Caco-2 (cell line): ENCODE measurements at regions of chr14 and their contacts with region 1.

Region 1: GRCh38 chr14:68297876-68298469 is 478.4 kb downstream of the RAD51B start:
- DNase-seq: peak; percentile 36 to 49
- H3K4me3 ChIP-seq: no peak overlapping the region
- H3K4me3 Mint-ChIP-seq: no peak overlapping the region
- H3K27ac Mint-ChIP-seq: peak overlapping the region; percentile 21
- H3K4me1 ChIP-seq: peaks cover 35% of the 10 kb centered on the region
- H3K4me1 Mint-ChIP-seq: peaks cover 27% of the 10 kb centered on the region
- H3K27me3 ChIP-seq: no peaks in the 10 kb centered on the region
- H3K27me3 Mint-ChIP-seq: no peaks in the 10 kb centered on the region
- CTCF ChIP-seq: no peak

Region 2: GRCh38 chr14:68255697-68256203 is 42.2 kb before region 1 on chr14:
- CTCF ChIA-PET with region 1: no interaction called
- POLR2A ChIA-PET with region 1: no interaction called
- intact Hi-C with region 1: loop called (anchors 5 kb)
- DNase-seq: no peak
- H3K4me3 ChIP-seq: no peak overlapping the region
- H3K4me3 Mint-ChIP-seq: no peak overlapping the region
- H3K27ac Mint-ChIP-seq: no peak overlapping the region
- H3K4me1 ChIP-seq: peaks cover 19% of the 10 kb centered on the region
- H3K4me1 Mint-ChIP-seq: peaks cover 26% of the 10 kb centered on the region
- H3K27me3 ChIP-seq: no peaks in the 10 kb centered on the region
- H3K27me3 Mint-ChIP-seq: no peaks in the 10 kb centered on the region
- CTCF ChIP-seq: no peak